CD14-positive monocyte (primary cell): ENCODE measurements at regions of chr18 and their contacts with region 1.

Region 1: DNA sequence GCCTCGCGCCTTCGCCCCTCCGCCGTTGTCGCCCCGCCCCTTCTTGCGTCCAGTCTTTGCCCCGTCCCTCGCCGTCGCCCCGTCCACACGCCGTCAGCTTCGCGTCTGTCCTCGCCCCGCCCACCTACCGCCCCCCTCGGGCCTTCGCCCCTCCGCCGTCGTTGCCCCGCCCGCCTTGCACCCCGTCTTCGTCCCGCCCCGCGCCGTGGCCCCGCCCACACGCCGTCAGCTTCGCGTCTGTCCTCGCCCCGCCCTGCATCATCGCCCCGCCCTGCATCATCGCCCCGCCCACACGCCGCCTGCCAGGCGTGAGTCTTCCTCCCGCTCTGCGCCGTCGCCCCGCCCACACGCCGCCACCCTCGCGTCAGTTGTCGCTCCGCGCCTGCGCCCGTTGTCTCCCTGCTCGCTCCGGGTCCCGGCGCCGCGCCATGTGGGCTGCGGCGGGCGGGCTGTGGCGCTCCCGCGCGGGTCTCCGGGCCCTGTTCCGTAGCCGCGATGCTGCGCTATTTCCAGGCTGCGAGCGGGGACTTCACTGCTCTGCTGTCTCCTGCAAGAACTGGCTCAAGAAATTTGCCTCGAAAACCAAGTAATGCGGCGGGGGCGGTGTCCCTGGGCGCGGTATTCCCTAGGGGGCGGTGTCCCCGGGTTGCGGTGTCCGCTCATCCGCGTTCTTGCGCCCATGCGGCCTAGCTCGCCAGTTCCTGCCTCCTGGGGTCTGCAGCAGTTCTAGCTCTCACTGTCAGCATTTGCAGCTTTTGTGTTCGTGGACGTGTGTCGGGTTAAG is at the start of gene RBFA:
- DNase-seq: peak; percentile 94 to 99 (median 99)
- H3K4me3 ChIP-seq: peak within 1 kb of the TSS; percentile 60 to 94 (median 78)
- H3K4me3 Mint-ChIP-seq: peak within 1 kb of the TSS; percentile 83 to 93
- H3K27ac ChIP-seq: peak within 1 kb of the TSS; percentile 90 to 93
- H3K27ac Mint-ChIP-seq: peak within 1 kb of the TSS; percentile 94 to 99 (median 98)
- H3K4me1 ChIP-seq: peaks cover 18 to 22% of the 10 kb centered on the region in 2 donors
- H3K4me1 Mint-ChIP-seq: peaks cover 24% of the 10 kb centered on the region
- H3K27me3 ChIP-seq: no peaks in the 10 kb centered on the region
- H3K27me3 Mint-ChIP-seq: peaks cover 0 to 2% (median 2%) of the 10 kb centered on the region in 3 donors
- CTCF ChIP-seq: peak; percentile 41
- polyA plus RNA-seq, gene RBFA: 4.0 to 14.7 (median 5.7) TPM

Region 2: GRCh38 chr18:79068937-79069791 is 965.1 kb before region 1 on chr18 and contains the start of gene ATP9B:
- intact Hi-C with region 1: loop called (anchors 5 to 10 kb)
- DNase-seq: peak; percentile 96 to 100 (median 99)
- H3K4me3 ChIP-seq: peak within 1 kb of the TSS; percentile 64 to 94 (median 89)
- H3K4me3 Mint-ChIP-seq: peak within 1 kb of the TSS; percentile 83 to 87
- H3K27ac ChIP-seq: peak within 1 kb of the TSS; percentile 74 to 92
- H3K27ac Mint-ChIP-seq: peak within 1 kb of the TSS; percentile 88 to 97 (median 91)
- H3K4me1 ChIP-seq: peaks cover 21 to 32% of the 10 kb centered on the region in 2 donors
- H3K4me1 Mint-ChIP-seq: peaks cover 29% of the 10 kb centered on the region
- H3K27me3 ChIP-seq: peaks cover 0 to 6% of the 10 kb centered on the region in 2 donors
- H3K27me3 Mint-ChIP-seq: peaks cover 8 to 19% (median 9%) of the 10 kb centered on the region in 3 donors
- CTCF ChIP-seq: no peak
- polyA plus RNA-seq, gene ATP9B: 7.2 to 20.3 (median 14.0) TPM

Region 3: DNA sequence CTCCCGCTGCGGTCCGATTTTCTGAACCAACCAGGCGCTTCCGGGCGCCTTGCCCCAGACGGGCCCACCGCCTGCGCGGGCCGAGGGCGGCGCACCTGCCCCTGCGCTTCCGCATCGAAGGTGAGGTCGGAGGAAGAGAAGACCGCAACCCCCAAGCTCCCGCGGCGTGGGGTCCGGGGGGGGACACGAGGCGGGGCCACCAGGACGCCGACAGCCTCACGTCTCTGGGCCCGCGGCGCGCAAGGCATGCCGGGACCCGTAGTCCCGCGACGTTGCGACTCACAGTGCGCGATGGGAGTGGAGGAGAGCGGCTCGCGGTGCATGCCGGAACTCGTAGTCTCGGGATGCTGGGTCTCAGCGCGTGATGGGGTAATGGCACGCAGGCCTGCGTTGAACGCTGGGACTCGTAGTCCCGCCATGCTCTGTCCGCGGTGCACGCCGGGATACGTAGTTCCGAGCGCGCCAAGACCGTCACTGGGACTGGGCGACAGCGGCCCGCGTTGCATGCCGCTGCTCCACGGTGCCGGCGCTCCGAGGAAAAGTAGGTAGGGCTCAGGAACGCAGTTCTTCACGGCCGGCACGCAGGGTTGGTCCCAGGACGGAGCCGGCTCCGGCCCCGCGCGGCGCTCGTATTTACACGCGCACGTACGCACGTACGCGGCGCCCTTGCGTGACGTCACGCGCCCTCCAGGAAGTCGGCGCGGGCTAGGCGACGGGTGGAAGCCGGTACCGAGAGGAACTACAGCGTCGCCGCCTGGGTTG is 355.0 kb before region 1 on chr18 and contains the start of gene CTDP1:
- intact Hi-C with region 1: loop called (anchors 5 kb)
- DNase-seq: peak; percentile 99
- H3K4me3 ChIP-seq: peak within 1 kb of the TSS; percentile 85 to 91 (median 86)
- H3K4me3 Mint-ChIP-seq: peak within 1 kb of the TSS; percentile 85 to 91
- H3K27ac ChIP-seq: peak within 1 kb of the TSS; percentile 91 to 97
- H3K27ac Mint-ChIP-seq: peak within 1 kb of the TSS; percentile 96 to 99 (median 98)
- H3K4me1 ChIP-seq: peaks cover 35 to 50% of the 10 kb centered on the region in 2 donors
- H3K4me1 Mint-ChIP-seq: peaks cover 58% of the 10 kb centered on the region
- H3K27me3 ChIP-seq: no peaks in the 10 kb centered on the region
- H3K27me3 Mint-ChIP-seq: peaks cover 0 to 4% (median 0%) of the 10 kb centered on the region in 3 donors
- CTCF ChIP-seq: no peak
- polyA plus RNA-seq, gene CTDP1: 9.1 to 13.9 (median 9.1) TPM

Region 4: GRCh38 chr18:79988451-79989194 is 45.6 kb before region 1 on chr18 and contains the start of gene TXNL4A:
- intact Hi-C with region 1: loop called (anchors 5 kb)
- DNase-seq: peak; percentile 77 to 88 (median 87)
- H3K4me3 ChIP-seq: peak within 1 kb of the TSS; percentile 61 to 96 (median 79)
- H3K4me3 Mint-ChIP-seq: peak within 1 kb of the TSS; percentile 93 to 98
- H3K27ac ChIP-seq: peak within 1 kb of the TSS; percentile 75 to 95
- H3K27ac Mint-ChIP-seq: peak within 1 kb of the TSS; percentile 92 to 98 (median 97)
- H3K4me1 ChIP-seq: peaks cover 21 to 27% of the 10 kb centered on the region in 2 donors
- H3K4me1 Mint-ChIP-seq: peaks cover 24% of the 10 kb centered on the region
- H3K27me3 ChIP-seq: no peaks in the 10 kb centered on the region
- H3K27me3 Mint-ChIP-seq: peaks cover 0 to 2% (median 0%) of the 10 kb centered on the region in 3 donors
- CTCF ChIP-seq: no peak
- polyA plus RNA-seq, gene TXNL4A: 34.5 to 192 (median 150) TPM

Region 5: DNA sequence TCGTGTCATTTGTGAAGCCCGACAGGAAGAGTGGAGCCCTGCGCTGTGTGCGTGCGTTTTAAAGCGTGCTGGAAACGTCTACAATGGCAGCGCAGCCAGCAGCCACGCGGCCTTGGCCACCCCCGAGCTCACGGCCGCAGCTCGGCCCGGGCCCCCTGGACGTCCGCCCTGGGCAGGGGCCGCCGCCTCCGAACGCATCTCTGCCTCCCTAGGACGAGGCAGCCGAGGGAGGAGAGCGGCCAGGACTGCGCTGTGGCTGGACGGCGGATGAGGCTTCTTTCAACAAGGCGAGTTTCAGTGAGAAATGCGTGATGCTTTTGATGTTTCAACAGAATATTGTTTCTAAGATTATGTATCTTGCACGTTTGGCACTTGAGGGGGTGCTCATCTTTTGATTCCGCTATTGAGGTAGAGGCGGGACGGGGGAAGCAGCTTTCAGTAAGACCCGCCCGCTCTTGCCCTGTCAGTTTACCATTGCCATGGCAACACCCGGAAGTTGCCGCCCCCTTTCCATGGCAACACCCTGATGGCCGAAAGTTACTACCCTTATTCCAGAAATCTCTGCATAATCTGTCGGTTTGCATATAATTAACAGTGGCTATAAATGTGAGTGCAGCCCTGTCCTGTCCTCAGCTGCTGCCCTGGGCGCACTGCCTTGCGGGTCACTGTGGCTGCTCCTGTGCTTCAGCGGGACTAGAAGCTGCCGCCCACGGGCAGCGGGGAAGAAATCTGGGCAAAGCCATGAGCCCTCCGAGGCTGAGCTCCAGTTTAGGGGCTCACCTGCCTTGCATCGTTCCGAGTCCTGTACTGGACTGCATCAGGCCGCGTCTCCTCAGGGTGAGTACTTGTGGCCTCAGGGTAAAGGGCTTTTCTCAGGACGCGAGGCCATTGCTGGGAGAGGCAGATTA is 113.4 kb after region 1 on chr18:
- intact Hi-C with region 1: loop called (anchors 5 to 10 kb)
- DNase-seq: peak; percentile 62 to 75 (median 70)
- H3K4me3 ChIP-seq: peak overlapping the region; percentile 53 to 85 (median 54)
- H3K4me3 Mint-ChIP-seq: peak overlapping the region; percentile 85 to 93
- H3K27ac ChIP-seq: peak overlapping the region; percentile 27 to 57
- H3K27ac Mint-ChIP-seq: peak overlapping the region in 6 of 7 donors; percentile 72 to 89 (median 86)
- H3K4me1 ChIP-seq: peaks cover 24 to 29% of the 10 kb centered on the region in 2 donors
- H3K4me1 Mint-ChIP-seq: peaks cover 26% of the 10 kb centered on the region
- H3K27me3 ChIP-seq: peaks cover 0 to 11% of the 10 kb centered on the region in 2 donors
- H3K27me3 Mint-ChIP-seq: peaks cover 11 to 18% (median 12%) of the 10 kb centered on the region in 3 donors
- CTCF ChIP-seq: no peak

Region 6: DNA sequence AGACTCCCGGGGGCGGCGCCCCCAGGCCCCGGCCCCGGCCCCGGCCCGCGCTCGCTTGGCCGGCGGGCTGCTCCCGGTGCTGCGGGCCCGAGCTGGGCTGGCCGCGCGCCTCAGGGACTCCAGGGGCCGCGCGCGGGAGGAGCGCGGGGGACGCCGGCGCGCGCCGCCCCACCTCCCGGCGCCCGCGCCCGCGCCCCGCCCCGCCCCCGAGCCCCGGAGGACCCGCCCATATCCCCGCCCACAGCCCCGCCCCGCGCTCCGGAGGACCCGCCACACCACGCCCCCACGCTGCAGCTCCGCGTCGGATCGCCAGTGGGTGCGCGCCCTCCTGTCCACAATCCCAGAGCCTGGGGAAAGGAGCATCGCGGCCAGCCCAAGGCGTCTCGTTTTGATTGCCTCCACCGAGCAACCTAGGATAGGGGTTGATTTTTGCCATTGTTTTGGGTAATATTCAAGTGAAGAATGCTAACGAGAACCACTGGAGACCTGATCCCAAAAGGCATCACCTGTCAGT is 213.2 kb after region 1 on chr18 and contains the start of gene PARD6G:
- intact Hi-C with region 1: no loop called
- DNase-seq: peak; percentile 38 to 51 (median 40)
- H3K4me3 ChIP-seq: peak within 1 kb of the TSS; percentile 39 to 75 (median 60)
- H3K4me3 Mint-ChIP-seq: peak within 1 kb of the TSS; percentile 72 to 85
- H3K27ac ChIP-seq: no peak within 1 kb of the TSS
- H3K27ac Mint-ChIP-seq: no peak within 1 kb of the TSS
- H3K4me1 ChIP-seq: peaks cover 6 to 7% of the 10 kb centered on the region in 2 donors
- H3K4me1 Mint-ChIP-seq: peaks cover 5% of the 10 kb centered on the region
- H3K27me3 ChIP-seq: peaks cover 16 to 37% of the 10 kb centered on the region in 2 donors
- H3K27me3 Mint-ChIP-seq: peaks cover 32 to 42% (median 33%) of the 10 kb centered on the region in 3 donors
- CTCF ChIP-seq: no peak
- polyA plus RNA-seq, gene PARD6G: not detected